ENCODE measurements at regions of chr11 and their contacts with region 1.

Region 1: GRCh38 chr11:130580372-130580771 is 131.9 kb downstream of the ADAMTS15 start:
- DNase-seq: peak; percentile 47 to 83 (median 73)
- H3K4me3 ChIP-seq: no peak overlapping the region
- H3K27ac ChIP-seq: peak overlapping the region in 1 of 59 donors; percentile 6
- H3K27me3 ChIP-seq: peaks cover 0 to 28% (median 0%) of the 10 kb centered on the region in 45 donors
- CTCF ChIP-seq: peak in 8 of 56 donors; percentile 13 to 41 (median 28)

Region 2: GRCh38 chr11:130509942-130510341 is 70.4 kb before region 1 on chr11:
- intact Hi-C with region 1: no loop called
- DNase-seq: no peak
- H3K4me3 ChIP-seq: no peak overlapping the region
- H3K27ac ChIP-seq: peak overlapping the region in 10 of 59 donors; percentile 13 to 61 (median 42)
- H3K27me3 ChIP-seq: peaks cover 0 to 4% (median 0%) of the 10 kb centered on the region in 45 donors
- CTCF ChIP-seq: no peak

Region 3: DNA sequence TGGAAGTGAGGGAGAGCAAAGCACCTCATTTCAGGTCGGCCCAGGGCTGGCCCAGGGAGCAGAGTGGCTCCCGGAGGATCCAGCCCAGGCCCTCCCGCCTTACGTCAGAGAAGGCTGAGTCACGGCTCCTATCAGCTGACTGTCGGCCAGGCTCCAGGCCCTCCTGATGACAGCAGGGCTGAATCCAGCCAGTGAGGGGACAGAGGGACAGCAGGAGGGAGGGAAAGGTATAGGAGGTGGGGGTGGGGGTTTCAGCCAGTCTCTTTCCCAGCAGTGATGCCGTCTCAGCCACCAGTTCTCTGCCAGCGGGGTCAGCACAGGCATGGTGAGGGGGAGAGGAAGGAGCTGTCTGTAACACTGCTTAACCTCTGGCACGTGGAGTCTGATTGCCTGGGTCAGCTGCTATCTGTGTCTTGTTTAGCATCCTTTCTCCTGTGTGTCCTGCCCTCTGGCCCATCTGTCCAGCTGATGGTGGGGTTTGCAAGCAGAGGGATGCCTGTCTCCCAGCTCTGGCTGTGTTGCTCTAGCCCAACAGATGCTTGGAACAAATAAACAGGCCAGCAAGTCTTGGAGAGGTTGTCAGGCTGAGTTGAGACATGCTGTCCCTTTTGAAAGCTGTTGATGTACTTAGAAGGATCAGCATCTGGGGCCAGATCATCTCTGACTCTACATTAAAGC is 57.9 kb before region 1 on chr11:
- intact Hi-C with region 1: loop called in 1 of 2 experiments (anchors 1 kb)
- DNase-seq: peak in 9 of 10 donors; percentile 49 to 86 (median 63)
- H3K4me3 ChIP-seq: no peak overlapping the region
- H3K27ac ChIP-seq: peak overlapping the region in 20 of 59 donors; percentile 5 to 65 (median 37)
- H3K27me3 ChIP-seq: peaks cover 0 to 4% (median 0%) of the 10 kb centered on the region in 45 donors
- CTCF ChIP-seq: no peak

Region 4: GRCh38 chr11:130609121-130610035 is 29.0 kb after region 1 on chr11:
- intact Hi-C with region 1: no loop called
- DNase-seq: no peak
- H3K4me3 ChIP-seq: no peak overlapping the region
- H3K27ac ChIP-seq: peak overlapping the region in 12 of 59 donors; percentile 7 to 66 (median 46)
- H3K27me3 ChIP-seq: peaks cover 0 to 6% (median 0%) of the 10 kb centered on the region in 45 donors
- CTCF ChIP-seq: no peak

Region 5: GRCh38 chr11:130622141-130622542 is 41.8 kb after region 1 on chr11:
- intact Hi-C with region 1: no loop called
- DNase-seq: no peak
- H3K4me3 ChIP-seq: no peak overlapping the region
- H3K27ac ChIP-seq: no peak overlapping the region
- H3K27me3 ChIP-seq: peaks cover 0 to 25% (median 0%) of the 10 kb centered on the region in 45 donors
- CTCF ChIP-seq: no peak

Measured in dorsolateral prefrontal cortex (tissue), 120 donors.